Activated naive CD4-positive, alpha-beta T cell treated with anti-CD3 and anti-CD28 coated beads for 36 hours (primary cell): ENCODE measurements at regions of chr17 and their contacts with region 1.

Region 1: GRCh38 chr17:39927101-39927928 is at the starts of genes LRRC3C and ORMDL3:
- DNase-seq: peak; percentile 94
- H3K4me3 Mint-ChIP-seq: peak within 1 kb of the TSS; percentile 98
- H3K27ac Mint-ChIP-seq: peak within 1 kb of the TSS; percentile 94
- H3K4me1 Mint-ChIP-seq: peaks cover 56% of the 10 kb centered on the region
- H3K27me3 Mint-ChIP-seq: no peaks in the 10 kb centered on the region
- total RNA-seq, gene LRRC3C: not detected
- total RNA-seq, gene ORMDL3: 51.8 to 52.1 TPM

Region 2: DNA sequence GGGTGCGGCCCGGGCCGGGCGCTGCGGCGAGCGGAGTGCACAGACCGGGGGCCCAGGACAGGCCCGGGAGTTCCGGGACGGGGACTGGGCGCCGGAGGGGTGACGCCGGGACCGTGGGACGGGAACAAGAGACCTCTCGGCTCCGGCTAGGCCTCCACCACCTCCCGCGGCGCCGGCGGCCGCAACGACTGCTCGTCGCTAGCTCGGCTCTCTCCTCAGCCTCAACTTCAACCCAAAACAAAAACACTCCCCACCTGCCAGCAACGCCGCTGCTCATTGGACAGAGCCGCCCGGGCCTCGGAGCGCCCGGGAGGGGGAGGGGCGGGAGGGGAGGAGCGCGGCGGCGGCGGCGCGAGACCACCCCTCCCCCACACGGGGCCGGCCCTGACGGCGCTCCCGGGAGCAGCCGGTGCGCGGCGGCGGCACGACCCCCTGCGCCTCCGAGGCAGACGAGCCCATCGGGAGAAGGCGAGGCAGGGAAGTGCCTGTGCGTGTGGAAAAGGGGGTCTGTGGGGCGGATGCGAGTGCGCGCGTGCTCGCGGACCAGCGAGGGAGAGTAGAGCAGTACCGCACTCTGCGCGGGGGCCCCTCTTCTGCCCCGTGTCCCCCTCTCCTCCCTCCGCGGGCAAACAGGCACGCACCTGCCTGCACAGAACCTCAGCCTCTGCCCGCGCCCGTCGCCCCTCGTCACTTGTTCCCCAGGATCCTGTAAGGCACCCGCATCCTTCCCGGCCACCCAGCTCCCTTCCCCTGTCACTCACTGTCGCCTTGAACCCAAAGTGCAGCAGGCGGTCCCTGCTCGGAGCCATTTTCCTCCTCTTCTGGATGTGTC is 525.7 kb before region 1 on chr17 and contains the start of gene FBXL20:
- CTCF ChIA-PET with region 1: no interaction called
- intact Hi-C with region 1: loop called (anchors 10 kb)
- DNase-seq: peak; percentile 96
- H3K4me3 Mint-ChIP-seq: peak within 1 kb of the TSS; percentile 91
- H3K27ac Mint-ChIP-seq: peak within 1 kb of the TSS; percentile 90
- H3K4me1 Mint-ChIP-seq: peaks cover 61% of the 10 kb centered on the region
- H3K27me3 Mint-ChIP-seq: no peaks in the 10 kb centered on the region
- total RNA-seq, gene FBXL20: 14.2 to 15.4 TPM

Region 3: GRCh38 chr17:39636927-39637736 is 290.2 kb before region 1 on chr17 and contains the start of gene STARD3:
- CTCF ChIA-PET with region 1: no interaction called
- intact Hi-C with region 1: loop called (anchors 2 kb)
- DNase-seq: peak; percentile 94
- H3K4me3 Mint-ChIP-seq: peak within 1 kb of the TSS; percentile 92
- H3K27ac Mint-ChIP-seq: peak within 1 kb of the TSS; percentile 93
- H3K4me1 Mint-ChIP-seq: peaks cover 49% of the 10 kb centered on the region
- H3K27me3 Mint-ChIP-seq: no peaks in the 10 kb centered on the region
- total RNA-seq, gene STARD3: 56.1 to 56.8 TPM

Region 4: GRCh38 chr17:39915559-39915958 is 11.8 kb before region 1 on chr17:
- CTCF ChIA-PET with region 1: interaction called, 10 read pairs
- intact Hi-C with region 1: no loop called
- DNase-seq: no peak
- H3K4me3 Mint-ChIP-seq: no peak overlapping the region
- H3K27ac Mint-ChIP-seq: no peak overlapping the region
- H3K4me1 Mint-ChIP-seq: peaks cover 26% of the 10 kb centered on the region
- H3K27me3 Mint-ChIP-seq: no peaks in the 10 kb centered on the region

Region 5: DNA sequence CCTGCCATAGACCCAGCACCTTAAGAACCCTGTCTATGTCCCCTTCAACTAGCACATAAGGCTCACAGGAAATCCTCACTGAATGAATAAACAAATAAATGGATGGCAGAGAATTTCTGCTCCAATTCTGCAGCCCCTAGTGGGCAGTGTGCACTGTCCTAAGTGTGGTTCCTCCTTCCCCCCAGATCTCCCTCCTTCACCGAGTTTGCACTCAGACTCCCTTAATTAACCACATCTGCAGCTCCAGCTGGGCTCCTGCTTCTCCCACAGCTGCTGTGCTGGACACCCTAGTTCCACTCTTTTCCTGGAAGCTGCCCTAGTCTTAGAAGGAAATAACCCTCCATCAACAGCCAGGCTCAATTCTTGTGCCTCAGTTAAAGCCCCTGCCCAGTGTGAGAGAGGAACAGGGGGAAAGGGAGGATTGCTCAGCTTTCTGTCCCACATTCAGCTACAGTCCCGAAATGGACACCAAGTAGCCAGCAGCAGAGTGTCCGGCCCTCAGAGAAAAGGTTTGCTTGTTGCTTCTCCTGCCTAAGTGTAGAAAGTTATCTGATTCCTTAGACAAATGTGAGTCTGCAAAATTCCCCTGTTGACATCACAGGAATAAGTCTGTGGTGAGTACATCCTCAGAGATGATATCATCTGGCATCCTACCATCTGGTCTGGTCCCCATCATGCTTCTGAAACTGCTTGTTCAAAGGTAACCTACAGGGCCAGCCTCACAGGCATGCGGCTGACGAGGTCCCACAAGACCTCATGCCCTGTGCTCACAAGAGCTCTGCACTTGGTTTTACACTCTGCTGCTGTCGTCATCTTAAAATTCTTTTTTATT is 12.5 kb after region 1 on chr17:
- CTCF ChIA-PET with region 1: no interaction called
- intact Hi-C with region 1: loop called (anchors 2 kb)
- DNase-seq: peak; percentile 75
- H3K4me3 Mint-ChIP-seq: no peak overlapping the region
- H3K27ac Mint-ChIP-seq: peak overlapping the region; percentile 36
- H3K4me1 Mint-ChIP-seq: peaks cover 14% of the 10 kb centered on the region
- H3K27me3 Mint-ChIP-seq: no peaks in the 10 kb centered on the region

Region 6: GRCh38 chr17:39952680-39953470 is 25.6 kb after region 1 on chr17:
- CTCF ChIA-PET with region 1: interaction called, 4 read pairs
- intact Hi-C with region 1: loop called (anchors 1 kb)
- DNase-seq: peak; percentile 98
- H3K4me3 Mint-ChIP-seq: peak overlapping the region; percentile 79
- H3K27ac Mint-ChIP-seq: peak overlapping the region; percentile 66
- H3K4me1 Mint-ChIP-seq: peaks cover 10% of the 10 kb centered on the region
- H3K27me3 Mint-ChIP-seq: no peaks in the 10 kb centered on the region

Region 7: GRCh38 chr17:39980351-39981206 is 53.3 kb after region 1 on chr17 and contains the start of gene PSMD3:
- CTCF ChIA-PET with region 1: interaction called, 8 read pairs
- intact Hi-C with region 1: loop called (anchors 1 kb)
- DNase-seq: peak; percentile 99
- H3K4me3 Mint-ChIP-seq: peak within 1 kb of the TSS; percentile 88
- H3K27ac Mint-ChIP-seq: peak within 1 kb of the TSS; percentile 80
- H3K4me1 Mint-ChIP-seq: peaks cover 39% of the 10 kb centered on the region
- H3K27me3 Mint-ChIP-seq: peaks cover 2% of the 10 kb centered on the region
- total RNA-seq, gene PSMD3: 122 to 125 TPM